HCT116 (cell line): ENCODE measurements at regions of chr5 and their contacts with region 1.

Region 1: DNA sequence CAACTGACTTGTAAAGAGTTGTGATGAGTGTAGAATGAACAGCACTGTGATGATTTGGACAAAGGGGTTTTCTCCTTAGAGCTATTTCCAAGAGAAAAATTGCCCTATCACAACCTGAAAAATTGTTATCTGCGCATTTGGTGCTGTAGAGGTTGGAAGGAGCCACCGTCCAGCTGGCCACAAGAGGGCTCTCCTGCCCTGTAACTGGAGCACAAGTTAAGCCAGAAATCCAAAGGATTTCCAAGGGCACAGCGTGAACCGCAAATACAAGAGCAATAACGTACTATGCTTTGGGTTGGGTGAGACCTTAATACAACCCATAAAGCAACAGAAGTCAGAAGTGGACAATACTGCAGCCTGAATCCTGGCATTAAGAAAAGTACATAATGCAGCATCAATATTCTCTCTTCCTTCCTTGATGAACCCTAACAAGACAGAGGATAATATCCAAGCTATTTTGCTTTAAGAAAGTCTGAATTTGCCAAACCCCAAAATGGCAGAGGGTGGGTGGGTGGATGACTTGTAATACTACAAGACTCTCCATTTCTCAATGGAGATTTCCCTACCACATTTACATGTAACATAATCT is 56.8 kb upstream of the SMIM32 start:
- DNase-seq: peak; percentile 54
- ATAC-seq: peak; percentile 95
- H3K4me3 ChIP-seq: no peak overlapping the region
- H3K27ac ChIP-seq: no peak overlapping the region
- H3K4me1 ChIP-seq: no peaks in the 10 kb centered on the region
- H3K27me3 ChIP-seq: peaks cover 27% of the 10 kb centered on the region
- CTCF ChIP-seq: peak; percentile 75 to 94 (median 94)
- POLR2A ChIP-seq: no peak
- RAD21 ChIP-seq: peak; percentile 87

Region 2: DNA sequence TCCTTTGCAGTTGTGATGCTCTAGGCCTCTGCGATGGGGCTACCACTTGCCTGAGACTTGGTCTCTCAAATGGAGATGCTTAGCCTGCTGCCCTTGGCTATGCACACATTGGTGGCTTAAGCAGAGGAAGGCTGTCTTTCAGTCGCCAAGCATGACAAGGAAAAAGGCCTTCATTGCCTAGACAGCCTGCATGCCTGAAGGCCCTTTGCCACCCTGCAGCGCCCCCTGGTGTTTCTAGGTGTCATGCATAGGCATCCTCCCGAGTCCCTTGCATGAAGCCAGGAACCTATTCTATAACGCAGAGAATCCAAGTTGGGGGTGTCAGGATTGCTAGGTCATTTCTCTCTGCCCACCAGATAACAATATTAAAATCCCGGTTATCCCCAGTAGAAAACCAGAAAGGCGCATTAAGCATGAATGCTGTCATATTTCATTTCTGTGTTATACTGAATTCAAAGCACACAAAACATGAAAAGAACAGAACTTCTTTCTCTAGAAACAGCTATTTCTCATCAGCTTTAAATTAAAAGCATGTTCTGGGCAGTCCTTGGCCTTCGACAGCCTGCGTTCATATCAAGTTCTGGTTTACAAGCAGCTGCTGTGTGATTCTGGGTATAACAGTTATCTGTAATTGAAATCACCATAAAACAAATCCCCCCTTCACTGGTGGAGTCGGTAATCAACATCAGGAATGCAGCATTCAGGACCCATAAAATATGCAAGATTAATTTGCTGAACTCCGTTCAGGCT is 175.2 kb after region 1 on chr5:
- CTCF ChIA-PET with region 1: interaction called, 7 read pairs
- POLR2A ChIA-PET with region 1: no interaction called
- RAD21 ChIA-PET with region 1: no interaction called
- intact Hi-C with region 1: loop called (anchors 1 kb)
- DNase-seq: peak; percentile 47
- ATAC-seq: peak; percentile 99
- H3K4me3 ChIP-seq: no peak overlapping the region
- H3K27ac ChIP-seq: no peak overlapping the region
- H3K4me1 ChIP-seq: no peaks in the 10 kb centered on the region
- H3K27me3 ChIP-seq: peaks cover 22% of the 10 kb centered on the region
- CTCF ChIP-seq: peak; percentile 75 to 93 (median 93)
- POLR2A ChIP-seq: no peak
- RAD21 ChIP-seq: peak; percentile 76

Region 3: DNA sequence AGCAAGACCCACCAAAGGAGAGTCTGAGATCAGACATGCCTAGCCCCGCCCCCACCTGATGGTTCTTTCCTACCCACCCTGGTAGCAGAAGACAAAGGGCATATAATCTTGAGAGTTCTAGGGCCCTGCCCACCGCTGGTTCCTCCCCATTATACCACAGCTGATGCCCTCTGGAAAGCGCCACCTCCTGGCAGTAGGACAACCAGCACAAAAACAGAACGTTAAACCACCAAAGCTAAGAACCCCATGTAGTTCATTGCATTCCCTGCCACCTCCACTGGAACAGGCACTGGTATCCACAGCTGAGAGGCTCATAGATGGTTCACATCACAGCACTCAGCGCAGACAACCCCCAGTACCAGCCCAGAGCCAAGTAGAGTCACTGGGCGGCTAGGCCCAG is 196.8 kb after region 1 on chr5:
- CTCF ChIA-PET with region 1: interaction called, 9 read pairs
- POLR2A ChIA-PET with region 1: no interaction called
- RAD21 ChIA-PET with region 1: no interaction called
- intact Hi-C with region 1: loop called (anchors 1 kb)
- DNase-seq: peak; percentile 8
- ATAC-seq: peak; percentile 83
- H3K4me3 ChIP-seq: no peak overlapping the region
- H3K27ac ChIP-seq: no peak overlapping the region
- H3K4me1 ChIP-seq: no peaks in the 10 kb centered on the region
- H3K27me3 ChIP-seq: 0 out of 2 replicates have a peak, but pooled peaks cover 9% of the 10 kb centered on the region
- CTCF ChIP-seq: peak; percentile 6 to 58 (median 56); a peak in 4 of 6 replicates
- POLR2A ChIP-seq: no peak
- RAD21 ChIP-seq: peak; percentile 18; the same call in 1 of the 2 replicates

Region 4: DNA sequence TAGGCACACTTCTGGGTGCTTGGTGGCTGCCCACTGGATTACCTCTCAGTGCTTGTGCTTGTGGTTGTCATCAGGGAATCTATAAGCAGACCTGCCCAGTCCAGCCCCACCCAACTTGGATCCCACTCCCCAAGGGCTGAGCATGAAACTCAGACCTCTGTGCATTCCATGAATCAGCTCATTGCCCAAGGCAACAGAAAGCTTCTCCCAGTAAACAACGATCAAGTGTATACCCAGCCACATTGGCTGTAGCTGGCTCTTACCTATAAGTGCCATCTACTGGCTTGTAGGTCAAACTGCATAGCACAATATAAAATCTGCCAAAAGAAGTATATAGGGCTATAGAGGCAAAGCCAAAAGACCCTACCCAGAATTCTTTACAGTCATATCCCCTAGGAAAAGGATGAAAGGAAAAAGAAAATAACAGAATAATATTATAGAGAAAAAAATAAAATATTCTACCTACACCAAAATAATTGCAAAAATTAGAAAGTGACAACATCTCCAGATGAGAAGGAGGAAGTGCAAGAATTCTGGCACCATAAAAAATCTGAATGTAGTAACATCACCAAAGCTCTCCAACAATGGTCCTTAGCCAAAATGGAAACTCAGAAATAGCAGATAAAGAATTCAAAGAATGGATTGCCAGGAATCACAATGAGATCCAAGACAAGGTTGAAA is 436.6 kb after region 1 on chr5:
- CTCF ChIA-PET with region 1: interaction called, 7 read pairs
- POLR2A ChIA-PET with region 1: no interaction called
- RAD21 ChIA-PET with region 1: no interaction called
- intact Hi-C with region 1: loop called (anchors 1 kb)
- DNase-seq: no peak
- ATAC-seq: peak; percentile 81
- H3K4me3 ChIP-seq: no peak overlapping the region
- H3K27ac ChIP-seq: no peak overlapping the region
- H3K4me1 ChIP-seq: no peaks in the 10 kb centered on the region
- H3K27me3 ChIP-seq: no peaks in the 10 kb centered on the region
- CTCF ChIP-seq: peak; percentile 22 to 55 (median 50); a peak in 5 of 6 replicates
- POLR2A ChIP-seq: no peak
- RAD21 ChIP-seq: peak; percentile 52

Region 5: GRCh38 chr5:136769900-136770684 is 520.3 kb after region 1 on chr5:
- CTCF ChIA-PET with region 1: interaction called, 16 read pairs
- POLR2A ChIA-PET with region 1: no interaction called
- RAD21 ChIA-PET with region 1: interaction called in 1 of 2 experiments, 4 read pairs
- intact Hi-C with region 1: loop called (anchors 1 kb)
- DNase-seq: peak; percentile 33
- ATAC-seq: peak; percentile 96
- H3K4me3 ChIP-seq: no peak overlapping the region
- H3K27ac ChIP-seq: no peak overlapping the region
- H3K4me1 ChIP-seq: no peaks in the 10 kb centered on the region
- H3K27me3 ChIP-seq: peaks cover 14% of the 10 kb centered on the region; the same call in 1 of the 2 replicates
- CTCF ChIP-seq: peak; percentile 49 to 86 (median 84); a peak in 5 of 6 replicates
- POLR2A ChIP-seq: no peak
- RAD21 ChIP-seq: peak; percentile 79